HEK293T (cell line): ENCODE measurements at regions of chr14 and their contacts with region 1.

Region 1: DNA sequence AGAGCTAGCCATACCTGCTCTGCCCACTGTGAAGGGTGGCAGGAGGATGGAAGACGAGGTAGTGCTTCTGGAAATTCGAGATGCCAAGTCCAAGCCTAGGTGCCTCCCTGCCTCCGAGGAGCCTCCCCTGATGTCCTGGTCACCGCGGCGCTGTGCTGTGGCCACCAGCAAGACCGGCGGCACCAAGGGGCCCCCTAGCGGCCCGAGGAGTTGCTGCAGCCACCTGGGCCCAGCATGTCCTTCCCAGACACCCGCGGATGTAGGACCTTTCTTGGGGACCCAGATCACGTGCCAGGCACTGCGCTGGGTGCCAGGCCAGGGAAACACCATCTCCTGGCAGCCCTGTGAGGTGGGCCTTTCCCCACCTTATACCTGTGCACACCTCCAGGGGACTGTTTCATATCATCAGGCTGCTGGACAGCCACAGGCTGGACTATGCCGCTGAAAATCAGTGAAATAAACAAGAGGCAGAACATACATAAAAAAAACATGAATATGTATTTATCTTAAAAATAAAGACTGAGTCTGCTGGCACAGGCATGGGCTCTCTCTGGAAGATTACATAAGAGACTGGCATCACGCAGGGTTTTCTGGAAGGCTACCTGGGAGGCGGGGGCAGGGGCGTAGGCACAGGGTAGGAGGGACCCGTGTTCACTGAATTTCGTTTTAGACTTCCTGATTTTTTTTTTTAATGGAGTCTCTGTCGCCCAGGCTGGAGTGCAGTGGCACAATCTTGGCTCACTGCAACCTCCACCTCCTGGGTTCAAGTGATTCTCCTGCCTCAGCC is 15.9 kb upstream of the HHIPL1 start:
- DNase-seq: peak; percentile 91

Region 2: DNA sequence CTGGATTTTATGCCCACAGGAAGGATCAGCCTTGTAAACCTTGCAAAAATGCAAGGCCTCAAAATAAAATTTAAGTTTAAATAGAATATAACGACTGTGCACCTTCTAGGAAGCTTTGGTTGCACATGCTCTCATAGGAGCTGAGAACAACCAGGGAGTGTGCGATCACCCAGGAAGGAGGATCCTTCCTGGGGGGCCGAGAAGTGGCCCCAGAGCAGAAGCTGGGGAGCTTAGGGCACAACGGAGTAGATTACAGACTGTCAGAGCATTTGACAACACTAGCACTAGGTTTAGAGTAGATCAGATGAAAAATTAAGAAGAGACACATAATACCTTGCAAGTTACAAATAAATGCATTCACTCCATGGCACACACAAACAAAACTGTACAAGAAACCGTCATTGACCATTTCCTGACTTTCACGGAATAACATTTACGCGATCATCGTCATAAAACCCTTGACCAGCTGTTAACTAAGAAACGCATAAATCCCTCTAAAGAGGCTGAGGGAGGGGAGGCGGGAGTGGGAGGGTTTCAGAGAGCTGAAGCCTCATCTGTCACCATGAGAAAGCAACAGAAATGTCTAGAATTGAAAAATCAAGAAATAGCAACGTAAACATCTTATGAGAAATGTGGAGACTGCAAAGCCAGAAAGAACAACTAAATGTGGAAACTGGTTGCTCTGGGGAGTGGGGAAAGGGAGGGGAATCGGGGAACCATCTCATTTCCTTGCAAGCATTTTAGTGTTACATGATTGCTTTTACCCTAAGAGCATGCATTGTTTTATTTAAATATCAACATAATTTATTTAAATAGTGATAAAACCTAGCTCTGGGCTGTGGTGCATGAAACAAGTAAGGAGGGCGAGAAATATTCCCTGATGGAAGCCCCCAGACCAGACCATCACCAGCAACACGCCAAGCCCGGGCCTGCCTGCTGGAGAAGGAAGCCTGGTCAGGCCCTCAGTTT is 11.9 kb before region 1 on chr14:
- CTCF ChIA-PET with region 1: interaction called, 12 read pairs
- POLR2A ChIA-PET with region 1: no interaction called
- DNase-seq: no peak

Region 3: DNA sequence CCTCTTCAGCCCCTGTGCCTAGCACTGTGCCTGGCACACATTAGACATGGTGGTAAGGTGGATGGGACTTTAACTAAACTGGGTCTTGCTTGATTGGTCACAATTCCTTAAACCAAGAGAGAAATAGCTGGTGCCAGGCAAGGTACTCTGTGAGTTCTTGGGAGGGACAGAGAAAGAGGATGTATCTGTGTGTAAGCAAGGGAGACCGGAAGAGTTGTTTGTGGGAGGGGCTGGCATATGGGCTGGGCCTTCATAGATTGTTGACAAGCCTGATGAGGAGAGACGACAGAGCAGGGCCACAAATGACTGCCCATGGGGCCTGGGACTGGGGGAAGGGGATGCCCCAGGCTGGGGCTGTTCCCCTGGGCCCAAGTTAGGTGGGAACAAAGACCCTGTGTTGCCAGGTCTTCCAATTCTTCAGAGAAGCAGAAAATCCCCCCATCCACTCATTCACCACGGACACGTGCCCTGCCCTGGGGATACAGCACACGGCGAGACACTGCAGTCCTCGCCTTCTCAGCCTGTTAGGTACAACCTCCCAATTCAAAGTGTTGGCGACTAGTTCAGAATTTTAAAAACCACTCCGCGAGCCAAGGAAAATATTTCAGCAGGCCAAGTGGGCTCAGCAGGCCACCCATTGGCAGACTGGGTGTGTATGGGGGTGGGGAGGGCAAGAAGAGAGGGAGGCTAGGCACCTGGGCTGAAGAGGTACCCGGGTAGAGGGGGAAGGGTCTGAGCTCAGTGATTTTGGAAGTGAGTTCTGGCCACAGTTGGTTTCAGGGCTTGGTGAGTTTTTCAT is 43.7 kb after region 1 on chr14:
- CTCF ChIA-PET with region 1: no interaction called
- POLR2A ChIA-PET with region 1: no interaction called
- DNase-seq: no peak